ENCODE measurements at regions of chr9 and their contacts with region 1.

Region 1: GRCh38 chr9:8895861-8896224 is 1096.3 kb upstream of the DMAC1 start:
- DNase-seq: no peak
- ATAC-seq: peak in 1 of 2 donors; percentile 26
- H3K4me3 ChIP-seq: no peak overlapping the region
- H3K27ac ChIP-seq: no peak overlapping the region
- H3K4me1 ChIP-seq: no peaks in the 10 kb centered on the region
- H3K27me3 ChIP-seq: no peaks in the 10 kb centered on the region
- CTCF ChIP-seq: peak in 3 of 5 experiments; percentile 10 to 46 (median 45)
- POLR2A ChIP-seq: no peak

Region 2: DNA sequence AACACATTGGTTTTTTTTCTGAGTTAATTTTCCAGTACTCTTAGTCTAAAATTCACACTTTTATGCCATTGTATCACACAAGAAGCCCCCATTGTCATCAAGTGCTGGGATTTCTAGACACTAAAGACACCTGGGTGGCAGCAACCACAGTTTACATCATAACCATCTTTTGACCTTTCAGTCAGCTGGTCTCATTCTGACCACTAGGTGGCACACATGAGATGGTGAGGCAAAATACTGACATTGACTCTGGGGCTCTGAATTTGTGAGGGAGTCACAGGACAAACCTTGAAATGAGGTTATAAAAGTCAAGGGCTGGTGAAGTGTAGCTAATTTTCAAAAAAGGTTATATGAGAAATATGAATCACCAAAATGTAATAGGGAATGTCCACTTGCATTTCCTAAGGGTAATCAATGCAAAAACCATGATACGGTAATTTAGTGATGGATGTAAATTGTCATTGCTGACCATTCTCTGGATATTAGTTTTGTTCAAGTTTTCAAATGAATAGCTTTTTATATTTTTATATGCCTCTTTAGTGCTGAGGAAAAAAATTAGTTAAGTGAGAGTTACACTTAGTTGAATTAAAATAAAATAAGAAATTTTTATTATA is 1325.6 kb before region 1 on chr9:
- in situ Hi-C with region 1: loop called in 1 of 4 experiments (anchors 25 kb)
- intact Hi-C with region 1: no loop called
- DNase-seq: peak in 1 of 2 donors; percentile 11
- ATAC-seq: no peak
- H3K4me3 ChIP-seq: no peak overlapping the region
- H3K27ac ChIP-seq: no peak overlapping the region
- H3K4me1 ChIP-seq: no peaks in the 10 kb centered on the region
- H3K27me3 ChIP-seq: no peaks in the 10 kb centered on the region
- CTCF ChIP-seq: peak; percentile 26 to 69 (median 52)
- POLR2A ChIP-seq: no peak

Measured in gastrocnemius medialis (tissue), 4 donors.